Motor neuron (in vitro differentiated cells): ENCODE measurements at regions of chr9 and their contacts with region 1.

Region 1: GRCh38 chr9:130997925-130998596 is 10.9 kb upstream of the LAMC3 start:
- ATAC-seq: peak; percentile 80 to 95 (median 91)
- H3K4me3 ChIP-seq: no peak overlapping the region
- H3K27ac ChIP-seq: peak overlapping the region in 1 of 2 donors; percentile 5
- H3K4me1 ChIP-seq: peaks cover 4 to 11% of the 10 kb centered on the region in 2 donors

Region 2: DNA sequence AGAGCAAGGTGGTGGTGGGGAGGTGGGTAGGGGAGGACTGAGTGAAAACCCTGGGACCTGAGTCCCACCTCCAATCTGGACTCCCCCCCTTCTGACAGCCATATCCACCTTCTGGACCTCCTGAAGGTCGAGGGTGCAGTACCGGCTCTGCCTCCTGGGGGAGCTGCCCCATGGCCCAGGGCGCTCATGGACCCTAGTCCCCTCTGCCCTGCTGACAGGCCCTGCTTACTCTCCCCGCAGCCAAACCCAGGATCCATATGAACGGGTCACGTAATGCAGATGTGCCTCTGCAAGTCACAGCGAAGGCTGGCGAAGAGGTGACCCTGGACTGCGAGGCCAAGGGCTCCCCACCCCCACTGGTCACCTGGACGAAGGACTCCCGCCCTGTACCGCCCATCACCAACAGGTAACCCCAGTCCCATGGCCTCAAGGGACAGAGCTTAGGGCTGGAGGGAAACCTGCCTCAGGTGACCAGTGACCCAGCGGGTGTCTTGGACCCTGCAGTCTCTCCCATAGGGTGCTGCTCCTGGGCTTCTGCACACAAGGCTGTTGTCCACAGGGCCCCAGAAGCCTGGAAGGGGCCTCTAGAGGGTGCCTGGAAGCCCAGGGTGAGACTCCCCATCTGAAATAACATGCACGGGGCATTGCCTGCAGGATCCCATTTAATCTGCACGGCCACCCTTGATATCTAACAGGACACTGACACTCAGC is 670.8 kb before region 1 on chr9:
- in situ Hi-C with region 1: no loop called
- ATAC-seq: peak in 3 of 8 experiments; percentile 1 to 62 (median 22)
- H3K4me3 ChIP-seq: no peak overlapping the region
- H3K27ac ChIP-seq: peak overlapping the region; percentile 77 to 82
- H3K4me1 ChIP-seq: peaks cover 48 to 61% of the 10 kb centered on the region in 2 donors

Region 3: GRCh38 chr9:130962418-130963316 is 35.4 kb before region 1 on chr9:
- in situ Hi-C with region 1: no loop called
- ATAC-seq: peak; percentile 85 to 99 (median 96)
- H3K4me3 ChIP-seq: no peak overlapping the region
- H3K27ac ChIP-seq: peak overlapping the region in 1 of 2 donors; percentile 68
- H3K4me1 ChIP-seq: peaks cover under 1 to 8% of the 10 kb centered on the region in 2 donors

Region 4: DNA sequence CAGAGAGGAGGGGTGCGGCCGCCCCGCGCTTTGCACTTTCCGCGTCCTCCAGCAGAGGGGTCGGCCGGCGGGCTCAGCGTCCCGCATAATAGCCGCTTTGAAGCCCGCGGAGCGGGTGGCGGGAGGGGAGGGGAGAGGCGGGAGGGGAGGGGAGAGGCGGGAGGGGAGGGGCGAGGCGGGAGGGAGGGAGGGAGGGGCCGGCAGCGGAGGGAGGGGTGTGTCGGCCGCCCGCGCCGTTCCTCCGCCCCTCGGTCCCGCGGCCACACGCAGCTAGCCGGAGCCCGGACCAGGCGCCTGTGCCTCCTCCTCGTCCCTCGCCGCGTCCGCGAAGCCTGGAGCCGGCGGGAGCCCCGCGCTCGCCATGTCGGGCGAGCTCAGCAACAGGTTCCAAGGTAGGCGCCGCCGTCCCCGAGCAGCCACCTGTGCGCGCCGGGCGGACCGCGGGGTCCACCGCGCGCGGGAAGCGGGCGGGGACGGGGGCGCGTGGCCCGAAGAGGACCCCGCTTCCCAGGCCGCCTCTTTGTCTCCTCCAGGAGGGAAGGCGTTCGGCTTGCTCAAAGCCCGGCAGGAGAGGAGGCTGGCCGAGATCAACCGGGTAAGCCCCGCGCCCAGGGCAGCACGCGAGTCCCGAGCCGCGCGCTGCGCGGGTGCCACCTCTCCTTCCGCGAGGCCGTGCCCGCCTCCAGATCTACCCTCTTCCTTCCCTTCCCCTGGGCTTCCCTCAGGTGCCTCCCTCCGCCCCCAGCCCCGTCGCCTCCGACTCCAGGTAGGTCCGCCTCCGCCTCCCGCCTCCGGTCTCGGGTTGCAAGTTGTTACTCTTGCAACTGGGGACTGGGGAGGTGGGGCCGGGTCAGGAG is 98.4 kb after region 1 on chr9 and contains the start of gene AIF1L:
- in situ Hi-C with region 1: loop called in 1 of 9 experiments (anchors 25 kb)
- ATAC-seq: peak; percentile 9 to 85 (median 78)
- H3K4me3 ChIP-seq: peak within 1 kb of the TSS; percentile 32 to 69 (median 58)
- H3K27ac ChIP-seq: peak within 1 kb of the TSS in 1 of 2 donors; percentile 13
- H3K4me1 ChIP-seq: peaks cover 0 to 18% of the 10 kb centered on the region in 2 donors
- total RNA-seq, gene AIF1L: 1.2 to 24.5 (median 5.1) TPM